HEK293 (cell line): ENCODE measurements at regions of chr10 and their contacts with region 1.

Region 1: DNA sequence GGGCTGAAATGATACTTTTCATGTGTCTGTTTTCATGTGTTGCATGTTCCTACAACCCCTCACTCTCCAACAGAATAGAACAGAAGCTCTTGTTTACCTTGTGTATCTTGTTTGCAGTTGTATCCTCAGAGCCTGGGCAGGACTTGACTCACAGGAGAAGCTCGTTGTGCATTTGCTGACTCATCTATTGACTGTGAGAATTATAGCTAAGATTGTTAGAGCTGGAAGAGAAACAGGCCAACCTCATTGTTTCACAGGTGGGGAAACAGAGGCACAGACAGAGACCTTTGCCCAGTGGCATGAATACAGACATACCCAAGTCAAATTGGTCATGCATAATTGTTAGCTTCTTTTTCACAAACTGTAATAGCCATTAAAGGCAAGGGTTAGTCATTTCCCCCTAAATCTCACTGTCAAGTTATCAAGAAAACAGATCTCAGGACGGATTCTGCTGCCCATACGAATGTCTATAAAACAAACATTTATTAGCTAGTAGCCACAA is 4.6 kb upstream of the TSPAN15 start:
- H3K4me3 ChIP-seq: no peak overlapping the region
- H3K27ac ChIP-seq: no peak overlapping the region
- H3K4me1 ChIP-seq: peaks cover 3% of the 10 kb centered on the region
- CTCF ChIP-seq: no peak

Region 2: GRCh38 chr10:69375307-69376151 is 71.2 kb before region 1 on chr10:
- CTCF ChIA-PET with region 1: no interaction called
- POLR2A ChIA-PET with region 1: no interaction called
- H3K4me3 ChIP-seq: no peak overlapping the region
- H3K27ac ChIP-seq: no peak overlapping the region
- H3K4me1 ChIP-seq: no peaks in the 10 kb centered on the region
- CTCF ChIP-seq: no peak

Region 3: GRCh38 chr10:69434169-69434568 is 12.5 kb before region 1 on chr10:
- CTCF ChIA-PET with region 1: interaction called, 11 read pairs
- POLR2A ChIA-PET with region 1: interaction called, 4 read pairs
- H3K4me3 ChIP-seq: no peak overlapping the region
- H3K27ac ChIP-seq: no peak overlapping the region
- H3K4me1 ChIP-seq: peaks cover 6% of the 10 kb centered on the region; the same call in 1 of the 2 replicates
- CTCF ChIP-seq: no peak

Region 4: DNA sequence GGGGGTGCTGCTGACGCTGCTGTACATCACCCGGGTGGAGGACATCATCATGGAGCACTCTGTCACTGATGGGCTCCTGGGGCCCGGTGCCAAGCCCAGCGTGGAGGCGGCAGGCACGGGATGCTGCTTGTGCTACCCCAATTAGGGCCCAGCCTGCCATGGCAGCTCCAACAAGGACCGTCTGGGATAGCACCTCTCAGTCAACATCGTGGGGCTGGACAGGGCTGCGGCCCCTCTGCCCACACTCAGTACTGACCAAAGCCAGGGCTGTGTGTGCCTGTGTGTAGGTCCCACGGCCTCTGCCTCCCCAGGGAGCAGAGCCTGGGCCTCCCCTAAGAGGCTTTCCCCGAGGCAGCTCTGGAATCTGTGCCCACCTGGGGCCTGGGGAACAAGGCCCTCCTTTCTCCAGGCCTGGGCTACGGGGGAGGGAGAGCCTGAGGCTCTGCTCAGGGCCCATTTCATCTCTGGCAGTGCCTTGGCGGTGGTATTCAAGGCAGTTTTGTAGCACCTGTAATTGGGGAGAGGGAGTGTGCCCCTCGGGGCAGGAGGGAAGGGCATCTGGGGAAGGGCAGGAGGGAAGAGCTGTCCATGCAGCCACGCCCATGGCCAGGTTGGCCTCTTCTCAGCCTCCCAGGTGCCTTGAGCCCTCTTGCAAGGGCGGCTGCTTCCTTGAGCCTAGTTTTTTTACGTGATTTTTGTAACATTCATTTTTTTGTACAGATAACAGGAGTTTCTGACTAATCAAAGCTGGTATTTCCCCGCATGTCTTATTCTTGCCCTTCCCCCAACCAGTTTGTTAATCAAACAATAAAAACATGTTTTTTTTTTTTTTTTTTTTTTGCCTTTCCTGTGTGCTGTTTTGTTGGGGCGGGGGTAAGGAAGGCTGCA is 60.4 kb after region 1 on chr10:
- CTCF ChIA-PET with region 1: interaction called, 17 read pairs
- POLR2A ChIA-PET with region 1: no interaction called
- H3K4me3 ChIP-seq: no peak overlapping the region
- H3K27ac ChIP-seq: no peak overlapping the region
- H3K4me1 ChIP-seq: no peaks in the 10 kb centered on the region
- CTCF ChIP-seq: no peak